ENCODE measurements at regions of chr20 and their contacts with region 1.

Region 1: DNA sequence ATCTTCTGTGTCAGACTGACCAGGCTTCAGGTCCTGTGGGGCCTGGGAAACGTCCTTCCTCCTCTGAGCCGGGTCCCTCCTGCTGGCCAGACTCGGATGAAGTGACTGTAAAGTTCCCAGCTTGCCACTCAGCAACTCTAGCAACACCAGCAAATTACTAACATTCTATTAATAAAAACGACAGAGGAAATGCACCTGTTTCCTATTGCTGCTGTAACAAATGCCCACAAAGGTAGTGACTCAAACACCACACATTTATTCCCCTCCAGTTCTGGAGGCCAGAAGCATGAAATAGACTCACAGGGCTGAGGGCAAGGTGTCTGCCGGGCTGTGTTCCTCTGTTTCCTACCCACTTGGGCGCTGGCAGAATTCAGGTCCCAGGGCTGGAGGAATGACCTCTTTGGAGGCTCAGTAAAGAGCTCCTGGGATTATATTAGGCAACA is 48.8 kb downstream of the CTCFL start:
- DNase-seq: no peak
- ATAC-seq: no peak
- H3K4me3 Mint-ChIP-seq: no peak overlapping the region
- H3K27ac Mint-ChIP-seq: no peak overlapping the region
- H3K4me1 Mint-ChIP-seq: peaks cover 21% of the 10 kb centered on the region
- H3K27me3 Mint-ChIP-seq: no peaks in the 10 kb centered on the region

Region 2: GRCh38 chr20:57440678-57441520 is 35.2 kb before region 1 on chr20:
- CTCF ChIA-PET with region 1: interaction called, 5 read pairs
- POLR2A ChIA-PET with region 1: no interaction called
- intact Hi-C with region 1: loop called in 1 of 2 experiments (anchors 5 kb)
- DNase-seq: no peak
- ATAC-seq: no peak
- H3K4me3 Mint-ChIP-seq: no peak overlapping the region
- H3K27ac Mint-ChIP-seq: no peak overlapping the region
- H3K4me1 Mint-ChIP-seq: peaks cover 5% of the 10 kb centered on the region
- H3K27me3 Mint-ChIP-seq: no peaks in the 10 kb centered on the region

Measured in activated CD4-positive, alpha-beta T cell treated with anti-CD3 and anti-CD28 coated beads for 36 hours (primary cell).